GM10248 (cell line): ENCODE measurements at regions of chr16 and their contacts with region 1.

Region 1: DNA sequence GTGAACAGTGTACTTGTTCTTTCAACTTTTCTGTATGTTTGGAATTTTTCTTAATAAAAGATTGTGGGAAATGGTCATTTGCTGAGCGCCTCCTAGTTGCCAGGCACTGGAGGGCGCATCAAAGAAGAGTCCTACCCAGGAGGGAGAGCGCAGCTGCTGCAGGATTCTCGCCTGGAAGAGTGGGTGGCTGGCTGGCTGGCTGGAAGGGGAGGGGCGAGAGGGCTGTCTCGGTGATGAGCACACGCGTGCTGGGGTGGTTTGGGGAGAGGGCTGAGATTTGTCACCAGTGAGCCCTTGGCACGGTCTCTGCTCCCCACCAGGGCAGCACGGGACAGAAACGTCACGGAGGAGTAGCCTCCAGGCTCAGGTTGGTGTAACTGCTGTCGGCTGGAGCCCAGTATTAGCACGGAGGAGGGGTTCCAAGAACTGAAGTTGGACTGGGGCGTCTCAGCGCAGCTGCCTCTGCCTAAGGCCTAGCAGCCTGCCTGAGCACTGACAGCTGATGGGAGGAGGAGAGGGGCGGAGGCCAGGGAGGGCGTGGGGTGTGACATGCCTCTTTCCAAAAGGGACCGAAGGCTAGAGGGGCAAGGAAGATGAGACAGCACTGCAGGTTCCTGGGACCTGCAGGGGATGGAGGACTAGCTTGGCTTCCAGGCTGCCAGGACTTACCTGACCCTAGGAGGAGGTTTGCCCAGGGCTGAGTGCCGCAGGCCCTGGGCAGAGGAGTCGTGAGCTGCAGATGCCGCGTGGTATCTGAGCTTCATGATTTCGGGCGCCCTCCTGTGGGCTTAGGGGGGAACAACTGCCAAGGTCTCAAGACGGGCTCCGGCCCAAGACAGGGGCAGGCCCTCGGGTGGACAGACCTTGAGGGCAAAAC is 5.7 kb downstream of the LDHD start:
- DNase-seq: peak; percentile 92
- CTCF ChIP-seq: peak; percentile 93

Region 2: DNA sequence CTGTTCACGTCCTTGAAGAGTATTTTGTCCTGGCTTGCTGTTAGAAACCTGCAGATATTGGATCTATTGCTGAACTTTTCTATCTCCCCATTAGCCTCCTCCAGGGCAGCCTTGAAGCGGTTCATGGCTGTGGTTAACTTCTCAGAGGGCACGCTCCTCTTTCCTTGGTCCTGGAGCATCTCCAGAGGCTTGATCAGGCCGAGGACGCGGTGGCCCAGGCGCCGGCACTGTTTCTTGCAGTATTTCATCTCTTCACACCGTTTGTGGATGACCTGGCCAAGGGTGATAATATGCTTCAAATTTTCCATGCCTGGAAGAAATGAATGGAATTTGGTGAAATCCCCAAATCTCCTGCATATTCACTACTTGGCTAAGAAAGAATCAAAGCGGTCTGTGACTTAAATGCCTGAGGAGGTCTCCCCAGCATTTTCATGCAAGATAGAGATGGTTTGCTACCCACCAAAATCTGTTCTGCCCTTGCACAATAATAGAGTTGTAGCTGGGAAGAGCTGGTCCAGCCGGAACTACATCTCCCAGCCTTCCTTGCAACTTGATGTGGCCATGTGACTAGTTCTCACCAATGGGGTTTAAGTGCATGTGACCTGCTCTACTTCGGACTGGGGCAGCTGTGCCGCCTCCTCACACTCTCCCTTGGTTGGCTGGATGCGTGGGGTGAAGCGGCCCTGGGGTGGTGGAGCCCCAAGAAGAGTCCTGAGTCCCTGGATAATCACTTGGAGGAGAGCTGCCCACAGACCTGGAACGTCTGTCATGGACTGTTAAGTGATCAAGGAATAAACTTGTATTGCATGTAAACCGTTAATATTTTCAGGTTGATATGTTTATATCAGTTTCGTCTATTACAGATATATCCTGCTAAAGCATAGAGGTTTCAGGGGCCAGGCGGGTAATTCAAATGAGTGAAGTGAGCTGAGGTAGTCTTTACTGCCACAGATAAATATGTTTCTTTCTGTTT is 415.1 kb before region 1 on chr16:
- CTCF ChIA-PET with region 1: interaction called, 10 read pairs
- POLR2A ChIA-PET with region 1: no interaction called
- DNase-seq: peak; percentile 91
- CTCF ChIP-seq: no peak

Region 3: GRCh38 chr16:74862741-74863244 is 248.1 kb before region 1 on chr16:
- CTCF ChIA-PET with region 1: interaction called, 20 read pairs
- POLR2A ChIA-PET with region 1: no interaction called
- DNase-seq: peak; percentile 79
- CTCF ChIP-seq: peak; percentile 62

Region 4: DNA sequence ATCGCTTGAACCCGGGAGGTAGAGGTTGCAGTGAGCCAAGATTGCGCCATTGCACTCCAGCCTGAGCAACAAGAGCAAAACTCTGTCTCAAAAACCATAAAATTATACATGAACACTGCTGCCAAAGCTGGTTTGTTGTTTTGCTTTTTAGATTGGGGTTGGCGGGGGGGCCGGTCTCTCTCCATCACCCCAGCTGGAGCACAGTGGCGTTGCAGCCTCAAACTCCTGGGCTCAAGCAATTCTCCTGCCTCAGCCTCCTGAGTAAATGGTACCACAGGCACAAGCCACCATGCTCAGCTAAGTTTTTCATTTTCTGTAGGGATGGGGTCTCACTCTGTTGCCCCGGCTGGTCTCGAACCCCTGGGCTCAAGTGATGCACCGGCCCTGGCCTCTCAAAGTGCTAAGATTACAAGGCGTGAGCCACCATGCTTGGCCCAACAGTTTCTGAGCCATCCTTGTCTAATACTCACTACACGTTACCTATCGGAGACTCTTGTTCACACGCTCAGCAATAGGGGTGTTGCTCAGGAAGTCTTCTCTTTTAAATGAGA is 137.6 kb before region 1 on chr16:
- CTCF ChIA-PET with region 1: interaction called, 16 read pairs
- POLR2A ChIA-PET with region 1: no interaction called
- DNase-seq: no peak
- CTCF ChIP-seq: no peak

Region 5: DNA sequence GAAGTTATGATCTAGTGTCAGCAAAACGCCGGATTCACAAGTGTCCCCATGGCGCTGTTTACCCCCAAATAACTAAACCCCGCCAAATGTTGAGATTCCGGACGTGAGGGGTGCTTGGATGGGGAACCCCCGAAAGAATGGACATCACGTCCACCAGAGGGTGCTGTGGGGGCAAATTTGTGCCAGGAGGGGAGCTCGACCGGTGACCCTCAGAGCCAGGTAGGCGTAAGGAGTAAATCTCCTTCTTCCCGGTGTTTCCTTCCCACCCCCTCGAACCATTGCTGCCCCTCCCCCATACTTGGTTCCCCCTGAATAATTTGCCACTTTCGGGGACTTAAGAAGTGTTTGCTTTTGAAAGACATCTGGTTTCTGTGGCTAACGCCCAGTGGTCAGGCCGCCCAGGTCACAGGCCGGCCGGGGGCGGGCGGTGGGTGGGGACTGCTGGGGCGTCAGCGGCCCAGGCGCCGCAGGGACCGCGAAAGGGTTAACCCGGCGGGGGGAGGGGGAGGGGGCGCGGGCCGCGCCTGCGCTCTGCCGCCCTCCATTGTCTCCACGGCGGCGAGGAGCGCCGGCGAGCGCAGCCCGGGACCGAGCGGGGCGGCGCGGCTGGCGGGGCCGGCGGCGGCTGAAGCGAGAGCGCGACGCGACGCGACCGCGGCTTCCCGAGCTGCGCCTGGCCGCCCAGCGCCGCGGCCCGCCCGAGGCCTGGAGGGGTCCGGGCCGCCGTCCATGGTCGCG is 112.2 kb before region 1 on chr16 and contains the start of gene ZNRF1:
- CTCF ChIA-PET with region 1: interaction called, 108 read pairs
- POLR2A ChIA-PET with region 1: interaction called, 3 read pairs
- DNase-seq: peak; percentile 94
- CTCF ChIP-seq: peak; percentile 53

Region 6: GRCh38 chr16:75043175-75043895 is 67.5 kb before region 1 on chr16:
- CTCF ChIA-PET with region 1: interaction called, 12 read pairs
- POLR2A ChIA-PET with region 1: no interaction called
- DNase-seq: peak; percentile 30
- CTCF ChIP-seq: no peak

Region 7: GRCh38 chr16:75121949-75122568 is 11.2 kb after region 1 on chr16:
- CTCF ChIA-PET with region 1: interaction called, 32 read pairs
- POLR2A ChIA-PET with region 1: no interaction called
- DNase-seq: no peak
- CTCF ChIP-seq: no peak